Aorta (tissue), 5 donors: ENCODE measurements at regions of chrX and their contacts with region 1.

Region 1: DNA sequence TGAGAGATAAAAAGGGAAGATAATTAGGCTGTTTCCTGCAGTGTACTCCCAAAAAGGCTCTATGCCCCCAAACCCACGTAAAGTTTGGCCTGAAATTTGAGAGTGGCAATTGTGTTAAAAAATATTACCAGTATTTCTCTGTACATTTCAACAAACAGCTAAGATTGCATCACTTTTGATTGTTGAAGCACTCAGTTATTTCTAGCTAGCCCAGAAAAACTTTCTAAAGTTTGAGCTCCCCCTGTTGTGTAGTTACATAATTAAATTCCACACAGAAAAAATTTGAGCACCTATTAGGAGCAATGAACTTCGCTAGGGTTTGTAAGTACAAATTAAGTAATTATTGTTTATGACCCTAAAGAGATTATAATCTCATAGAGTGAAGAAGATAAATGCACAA is 109.4 kb downstream of the DLG3 start:
- DNase-seq: no peak
- ATAC-seq: no peak
- H3K4me3 ChIP-seq: no peak overlapping the region
- H3K27ac ChIP-seq: no peak overlapping the region
- H3K4me1 ChIP-seq: no peaks in the 10 kb centered on the region
- H3K27me3 ChIP-seq: no peaks in the 10 kb centered on the region

Region 2: GRCh38 chrX:70301716-70302115 is 252.4 kb before region 1 on chrX:
- intact Hi-C with region 1: no loop called
- DNase-seq: no peak
- ATAC-seq: no peak
- H3K4me3 ChIP-seq: no peak overlapping the region
- H3K27ac ChIP-seq: no peak overlapping the region
- H3K4me1 ChIP-seq: no peaks in the 10 kb centered on the region
- H3K27me3 ChIP-seq: no peaks in the 10 kb centered on the region

Region 3: DNA sequence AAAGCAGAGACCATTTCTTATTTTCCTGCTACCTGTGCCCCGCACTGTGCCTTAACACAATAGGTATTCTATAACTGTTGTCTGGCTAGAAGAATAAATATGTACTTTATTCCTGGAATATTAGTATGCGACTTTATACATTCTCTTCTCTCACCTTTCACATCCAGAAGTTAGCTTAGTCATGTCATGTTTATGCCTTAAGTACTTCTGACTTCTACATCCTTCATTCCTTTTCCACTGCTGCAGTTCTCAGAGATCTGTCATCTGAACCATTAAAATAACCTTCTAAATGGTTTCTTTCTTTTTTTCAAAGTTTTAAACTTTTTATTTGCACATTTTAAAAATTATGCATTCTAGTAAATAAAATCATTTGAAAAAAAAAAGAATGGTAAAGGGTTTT is 229.8 kb before region 1 on chrX:
- intact Hi-C with region 1: no loop called
- DNase-seq: no peak
- ATAC-seq: no peak
- H3K4me3 ChIP-seq: no peak overlapping the region
- H3K27ac ChIP-seq: no peak overlapping the region
- H3K4me1 ChIP-seq: no peaks in the 10 kb centered on the region
- H3K27me3 ChIP-seq: no peaks in the 10 kb centered on the region

Region 4: GRCh38 chrX:70454441-70455365 is 99.4 kb before region 1 on chrX:
- intact Hi-C with region 1: loop called (anchors 2 to 5 kb)
- DNase-seq: peak; percentile 69 to 89
- ATAC-seq: peak; percentile 85
- H3K4me3 ChIP-seq: peak overlapping the region; percentile 14 to 67
- H3K27ac ChIP-seq: peak overlapping the region in 1 of 2 donors; percentile 81
- H3K4me1 ChIP-seq: no peaks in the 10 kb centered on the region
- H3K27me3 ChIP-seq: no peaks in the 10 kb centered on the region